Right cardiac atrium (tissue), 5 donors: ENCODE measurements at regions of chr10 and their contacts with region 1.

Region 1: GRCh38 chr10:92880233-92880861 is 32.0 kb downstream of the EXOC6 start:
- DNase-seq: no peak
- ATAC-seq: peak; percentile 56 to 64
- H3K4me3 ChIP-seq: no peak overlapping the region
- H3K27ac ChIP-seq: no peak overlapping the region
- H3K4me1 ChIP-seq: no peaks in the 10 kb centered on the region
- H3K27me3 ChIP-seq: no peaks in the 10 kb centered on the region

Region 2: DNA sequence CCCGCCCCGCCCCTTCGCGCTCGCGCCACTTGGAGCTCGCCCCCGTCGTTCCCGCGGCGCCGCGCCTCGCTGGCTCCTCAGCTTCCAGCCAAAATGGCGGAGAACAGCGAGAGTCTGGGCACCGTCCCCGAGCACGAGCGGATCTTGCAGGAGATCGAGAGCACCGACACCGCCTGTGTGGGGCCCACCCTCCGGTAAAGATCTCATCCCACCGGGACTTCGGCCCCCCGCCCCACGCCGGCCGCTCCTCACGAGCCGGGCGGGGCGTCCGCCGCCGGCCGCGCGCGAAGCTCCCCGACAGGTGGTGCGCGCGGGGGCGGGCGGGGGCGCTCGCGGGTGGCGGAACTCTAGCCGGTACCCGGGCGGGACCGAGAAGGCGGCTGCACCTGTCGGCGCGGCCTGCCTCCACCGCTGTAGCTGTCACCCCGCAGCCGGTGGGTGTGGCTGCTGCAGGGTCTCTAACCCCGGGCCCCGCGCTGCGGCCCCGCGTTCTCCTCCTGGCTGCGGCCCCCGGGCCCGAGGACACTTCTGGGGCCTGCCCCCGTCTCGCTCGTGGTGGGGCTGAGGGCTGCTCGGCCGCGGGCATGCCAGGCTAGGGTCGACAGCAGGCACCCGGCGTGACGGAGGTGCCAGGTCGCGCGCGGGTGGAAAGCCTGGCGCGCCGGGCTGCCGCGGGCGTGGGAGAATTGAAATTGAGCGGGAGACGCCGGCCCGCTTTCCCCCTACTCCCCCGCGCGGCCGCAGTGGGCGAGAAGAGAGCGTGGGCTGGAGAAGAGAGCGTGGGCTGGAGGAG is 31.7 kb before region 1 on chr10 and contains the start of gene EXOC6:
- intact Hi-C with region 1: loop called in 2 of 4 experiments (anchors 5 kb)
- DNase-seq: peak; percentile 85 to 94 (median 93)
- ATAC-seq: peak; percentile 91
- H3K4me3 ChIP-seq: peak within 1 kb of the TSS; percentile 96
- H3K27ac ChIP-seq: peak within 1 kb of the TSS; percentile 53
- H3K4me1 ChIP-seq: no peaks in the 10 kb centered on the region
- H3K27me3 ChIP-seq: no peaks in the 10 kb centered on the region
- total RNA-seq, gene EXOC6: 6.7 to 9.5 (median 9.0) TPM

Region 3: GRCh38 chr10:92938841-92939240 is 58.5 kb after region 1 on chr10:
- intact Hi-C with region 1: no loop called
- DNase-seq: no peak
- ATAC-seq: no peak
- H3K4me3 ChIP-seq: no peak overlapping the region
- H3K27ac ChIP-seq: no peak overlapping the region
- H3K4me1 ChIP-seq: no peaks in the 10 kb centered on the region
- H3K27me3 ChIP-seq: no peaks in the 10 kb centered on the region